ENCODE measurements at regions of chr13 and their contacts with region 1.

Region 1: DNA sequence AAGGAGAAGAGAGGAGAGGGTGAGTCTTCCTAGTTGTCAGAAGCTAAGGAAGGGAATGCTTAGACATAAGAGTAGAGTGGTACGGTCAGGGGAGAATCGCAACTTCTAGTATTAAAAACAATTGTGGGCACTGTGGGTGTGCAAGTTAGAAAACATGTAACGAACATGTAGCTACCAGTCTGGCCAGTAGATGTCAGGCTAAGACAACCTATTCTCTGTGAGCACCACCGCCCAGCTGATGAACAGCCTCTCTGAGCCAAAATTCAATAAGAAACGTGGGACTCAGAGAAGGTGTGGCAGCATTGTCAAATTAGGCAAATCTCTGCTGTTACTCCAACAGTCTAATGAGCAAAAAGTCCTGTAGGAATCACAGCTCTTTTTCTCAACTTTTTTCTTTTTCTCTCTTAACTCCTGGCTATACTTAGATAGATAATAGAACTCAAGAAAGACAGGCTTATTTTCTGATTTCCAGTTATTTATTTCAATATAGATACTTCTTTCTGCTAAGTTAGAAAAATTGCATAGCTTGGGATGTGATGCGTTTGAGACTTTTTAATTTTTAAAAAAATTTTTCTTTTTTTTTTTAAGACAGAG is 186.2 kb downstream of the USP12 start:
- DNase-seq: peak; percentile 84
- ATAC-seq: peak; percentile 92
- H3K4me3 Mint-ChIP-seq: no peak overlapping the region
- H3K27ac Mint-ChIP-seq: no peak overlapping the region
- H3K4me1 Mint-ChIP-seq: no peaks in the 10 kb centered on the region
- H3K27me3 Mint-ChIP-seq: peaks cover 12% of the 10 kb centered on the region

Region 2: DNA sequence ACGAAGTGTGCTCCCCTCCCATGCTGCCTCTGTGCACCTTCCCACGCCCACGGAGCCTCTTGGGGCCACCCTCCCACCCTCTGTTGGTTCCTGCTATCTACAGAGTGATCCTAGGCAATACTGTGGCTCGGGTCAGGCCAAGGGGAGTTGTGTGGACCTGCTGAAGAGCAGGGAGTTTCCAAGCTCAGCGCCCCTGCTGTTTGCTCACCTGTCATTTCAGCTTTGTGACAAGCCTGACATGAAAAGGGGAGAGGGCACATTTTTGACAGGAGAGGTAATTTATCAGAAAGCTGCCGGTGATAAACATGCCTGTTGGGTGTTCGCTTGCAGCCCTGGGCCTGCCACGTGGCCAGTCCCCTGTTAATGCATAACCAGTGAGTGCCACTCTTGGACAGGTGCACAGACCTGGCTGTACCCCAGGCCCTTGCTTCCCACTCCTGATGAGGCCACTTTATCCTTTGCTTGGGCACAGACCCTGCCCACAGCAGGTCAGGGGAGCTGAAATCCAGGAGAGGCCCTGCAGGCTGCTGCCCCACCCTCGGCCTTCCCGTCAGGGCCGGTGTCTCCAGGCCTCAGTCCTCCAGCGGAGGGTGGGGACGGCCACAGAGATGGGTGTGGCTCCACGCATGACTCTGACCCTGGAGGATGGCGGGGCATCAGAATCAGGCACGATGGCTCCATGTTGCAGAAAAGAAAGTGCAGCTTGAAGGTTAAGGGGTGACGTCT is 23.3 kb before region 1 on chr13:
- CTCF ChIA-PET with region 1: no interaction called
- POLR2A ChIA-PET with region 1: no interaction called
- intact Hi-C with region 1: no loop called
- DNase-seq: no peak
- ATAC-seq: no peak
- H3K4me3 Mint-ChIP-seq: no peak overlapping the region
- H3K27ac Mint-ChIP-seq: no peak overlapping the region
- H3K4me1 Mint-ChIP-seq: no peaks in the 10 kb centered on the region
- H3K27me3 Mint-ChIP-seq: peaks cover 2% of the 10 kb centered on the region

Region 3: DNA sequence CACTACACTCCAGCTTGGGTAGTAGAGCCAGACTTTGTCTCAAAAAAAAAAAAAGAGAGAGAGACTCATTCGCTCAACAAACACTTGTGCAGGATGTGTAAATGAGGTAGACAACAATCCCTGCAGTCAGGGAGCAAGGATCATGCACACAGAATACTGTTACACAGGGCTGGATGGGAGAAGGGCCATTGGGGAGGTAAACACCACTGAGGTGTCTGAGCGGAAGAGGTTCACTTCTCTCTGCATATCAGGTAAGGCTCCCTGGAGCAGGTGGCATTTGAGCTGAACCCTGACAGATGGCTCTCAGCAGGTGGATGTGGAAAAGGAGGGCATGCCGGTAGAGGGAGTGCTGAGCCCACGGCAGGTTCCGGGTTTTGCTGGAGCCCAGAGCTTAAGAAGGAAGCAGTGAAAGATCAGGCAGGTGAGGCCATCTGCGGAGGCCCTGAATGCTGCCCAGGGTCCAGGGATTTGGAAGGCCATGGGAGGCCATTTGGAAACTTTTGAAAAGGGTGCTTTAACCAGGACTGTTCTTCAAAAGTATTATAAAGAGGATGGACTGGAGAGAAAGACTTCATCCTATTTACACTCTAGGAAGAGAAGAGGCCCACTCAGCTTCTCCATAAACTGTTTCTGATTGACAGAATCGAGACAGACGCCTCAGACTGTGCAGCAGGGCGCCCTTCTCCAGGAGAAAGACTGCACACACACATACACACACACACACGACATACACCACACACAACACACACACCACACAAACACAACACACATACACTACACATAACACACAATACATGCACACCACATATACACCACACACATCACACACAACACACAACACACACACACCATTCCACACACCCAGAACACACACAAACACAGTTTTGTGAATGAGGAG is 13.1 kb before region 1 on chr13:
- CTCF ChIA-PET with region 1: interaction called, 10 read pairs
- POLR2A ChIA-PET with region 1: no interaction called
- intact Hi-C with region 1: no loop called
- DNase-seq: peak; percentile 66
- ATAC-seq: peak; percentile 85
- H3K4me3 Mint-ChIP-seq: no peak overlapping the region
- H3K27ac Mint-ChIP-seq: no peak overlapping the region
- H3K4me1 Mint-ChIP-seq: peaks cover 5% of the 10 kb centered on the region
- H3K27me3 Mint-ChIP-seq: no peaks in the 10 kb centered on the region

Region 4: DNA sequence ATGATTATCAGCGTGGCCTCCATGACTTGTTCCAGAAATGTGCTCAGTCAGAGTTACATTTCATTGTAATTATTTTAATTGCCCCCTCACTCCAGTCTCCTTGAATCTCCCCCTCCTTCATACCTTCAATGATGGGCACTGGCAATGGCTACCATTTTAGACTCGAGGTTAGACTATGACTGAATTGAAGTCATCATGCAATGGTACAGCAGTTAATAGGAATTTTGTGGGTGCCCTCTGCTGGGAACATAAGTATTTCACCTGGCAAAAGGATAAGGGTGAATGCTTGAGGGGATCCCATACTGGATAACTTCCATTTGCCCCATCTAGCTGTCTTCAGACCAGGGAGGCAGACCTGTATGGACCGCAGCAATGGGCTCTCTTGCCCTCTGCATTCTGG is 218.5 kb after region 1 on chr13:
- CTCF ChIA-PET with region 1: interaction called, 8 read pairs
- POLR2A ChIA-PET with region 1: no interaction called
- intact Hi-C with region 1: loop called in 1 of 2 experiments (anchors 2 kb)
- DNase-seq: no peak
- ATAC-seq: no peak
- H3K4me3 Mint-ChIP-seq: no peak overlapping the region
- H3K27ac Mint-ChIP-seq: no peak overlapping the region
- H3K4me1 Mint-ChIP-seq: peaks cover 7% of the 10 kb centered on the region
- H3K27me3 Mint-ChIP-seq: no peaks in the 10 kb centered on the region

Region 5: GRCh38 chr13:27283906-27284493 is 298.6 kb after region 1 on chr13:
- CTCF ChIA-PET with region 1: interaction called, 13 read pairs
- POLR2A ChIA-PET with region 1: no interaction called
- intact Hi-C with region 1: loop called in 1 of 2 experiments (anchors 5 kb)
- DNase-seq: peak; percentile 52
- ATAC-seq: peak; percentile 44
- H3K4me3 Mint-ChIP-seq: no peak overlapping the region
- H3K27ac Mint-ChIP-seq: no peak overlapping the region
- H3K4me1 Mint-ChIP-seq: no peaks in the 10 kb centered on the region
- H3K27me3 Mint-ChIP-seq: no peaks in the 10 kb centered on the region

Region 6: GRCh38 chr13:27353166-27353583 is 367.8 kb after region 1 on chr13:
- CTCF ChIA-PET with region 1: interaction called, 183 read pairs
- POLR2A ChIA-PET with region 1: interaction called, 4 read pairs
- intact Hi-C with region 1: no loop called
- DNase-seq: peak; percentile 71
- ATAC-seq: peak; percentile 98
- H3K4me3 Mint-ChIP-seq: peak overlapping the region; percentile 48
- H3K27ac Mint-ChIP-seq: peak overlapping the region; percentile 58
- H3K4me1 Mint-ChIP-seq: peaks cover 19% of the 10 kb centered on the region
- H3K27me3 Mint-ChIP-seq: peaks cover 11% of the 10 kb centered on the region

Measured in activated CD4-positive, alpha-beta T cell treated with anti-CD3 and anti-CD28 coated beads for 36 hours (primary cell).